ENCODE measurements at regions of chr5 and their contacts with region 1.

Region 1: DNA sequence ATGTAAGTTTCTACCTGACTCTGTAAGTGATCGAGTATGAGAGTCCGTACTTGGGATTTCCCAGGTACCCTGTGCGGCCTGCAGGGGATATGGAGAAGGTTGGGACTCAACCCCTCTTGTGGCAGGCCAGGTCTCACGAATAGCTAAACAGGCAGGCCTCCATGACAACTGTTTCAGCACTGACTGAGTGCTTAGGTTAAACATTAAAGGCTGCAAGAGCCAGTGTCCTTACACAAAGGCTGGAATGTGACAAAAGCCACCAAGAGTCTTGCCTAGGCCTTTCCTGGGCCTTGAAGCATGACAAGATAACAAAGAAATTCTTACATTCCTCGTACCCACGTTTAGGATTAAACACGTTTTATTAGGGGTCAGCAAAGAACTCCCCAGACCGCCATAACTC is 58.6 kb downstream of the THBS4 start:
- DNase-seq: no peak
- H3K4me3 ChIP-seq: no peak overlapping the region
- H3K27ac ChIP-seq: no peak overlapping the region
- H3K4me1 ChIP-seq: no peaks in the 10 kb centered on the region
- H3K27me3 ChIP-seq: no peaks in the 10 kb centered on the region
- CTCF ChIP-seq: no peak
- POLR2A ChIP-seq: no peak

Region 2: GRCh38 chr5:79759436-79759835 is 334.4 kb before region 1 on chr5:
- intact Hi-C with region 1: no loop called
- DNase-seq: no peak
- H3K4me3 ChIP-seq: no peak overlapping the region
- H3K27ac ChIP-seq: no peak overlapping the region
- H3K4me1 ChIP-seq: no peaks in the 10 kb centered on the region
- H3K27me3 ChIP-seq: no peaks in the 10 kb centered on the region
- CTCF ChIP-seq: no peak
- POLR2A ChIP-seq: no peak

Region 3: GRCh38 chr5:79974891-79975290 is 118.9 kb before region 1 on chr5:
- intact Hi-C with region 1: no loop called
- DNase-seq: no peak
- H3K4me3 ChIP-seq: no peak overlapping the region
- H3K27ac ChIP-seq: no peak overlapping the region
- H3K4me1 ChIP-seq: no peaks in the 10 kb centered on the region
- H3K27me3 ChIP-seq: no peaks in the 10 kb centered on the region
- CTCF ChIP-seq: no peak
- POLR2A ChIP-seq: no peak

Region 4: GRCh38 chr5:80055491-80056170 is 38.2 kb before region 1 on chr5:
- intact Hi-C with region 1: no loop called
- DNase-seq: no peak
- H3K4me3 ChIP-seq: no peak overlapping the region
- H3K27ac ChIP-seq: no peak overlapping the region
- H3K4me1 ChIP-seq: no peaks in the 10 kb centered on the region
- H3K27me3 ChIP-seq: no peaks in the 10 kb centered on the region
- CTCF ChIP-seq: no peak
- POLR2A ChIP-seq: no peak

Region 5: DNA sequence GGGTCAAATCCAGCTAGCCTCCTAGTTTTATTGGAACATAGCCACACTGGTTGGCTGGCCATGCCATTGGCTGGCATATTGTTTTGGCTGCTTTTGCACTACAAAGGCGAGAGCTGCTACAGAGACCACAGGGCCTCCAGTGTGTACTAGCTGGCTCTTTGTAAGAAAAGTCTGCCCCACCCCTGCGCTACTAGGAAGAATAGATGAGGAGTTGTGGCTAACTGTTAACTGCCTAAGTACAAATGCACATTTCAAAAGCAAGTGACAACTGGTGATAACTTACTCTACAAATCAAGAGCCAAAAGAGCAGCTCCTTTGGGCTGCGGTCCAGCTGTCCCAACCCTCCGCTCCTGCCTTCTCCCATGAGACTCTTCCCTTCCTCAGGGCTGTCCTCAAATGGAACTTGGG is 98.2 kb after region 1 on chr5:
- intact Hi-C with region 1: loop called (anchors 10 kb)
- DNase-seq: no peak
- H3K4me3 ChIP-seq: no peak overlapping the region
- H3K27ac ChIP-seq: peak overlapping the region; percentile 63 to 68
- H3K4me1 ChIP-seq: peaks cover 22% of the 10 kb centered on the region
- H3K27me3 ChIP-seq: no peaks in the 10 kb centered on the region
- CTCF ChIP-seq: no peak
- POLR2A ChIP-seq: no peak

Region 6: DNA sequence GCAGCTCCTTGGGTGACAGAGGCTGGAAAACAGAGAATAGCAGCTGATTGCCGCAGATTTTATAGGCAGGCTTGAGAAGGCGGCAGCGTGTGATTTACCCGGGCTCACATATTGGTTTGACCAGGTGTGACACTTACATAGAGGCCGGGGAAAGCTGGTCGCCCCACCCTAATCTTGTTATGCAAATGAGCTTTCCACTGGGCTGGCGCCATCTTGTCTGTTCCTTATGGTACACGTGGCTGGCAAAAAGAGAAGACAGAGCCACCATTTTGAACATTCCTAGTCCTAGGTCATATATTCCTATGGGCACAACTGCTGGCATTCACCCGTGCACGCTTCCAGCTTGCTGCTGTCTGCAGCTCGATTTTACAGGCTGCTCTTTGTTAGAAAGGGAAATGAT is 214.7 kb after region 1 on chr5:
- intact Hi-C with region 1: loop called (anchors 2 kb)
- DNase-seq: no peak
- H3K4me3 ChIP-seq: no peak overlapping the region
- H3K27ac ChIP-seq: no peak overlapping the region
- H3K4me1 ChIP-seq: no peaks in the 10 kb centered on the region
- H3K27me3 ChIP-seq: no peaks in the 10 kb centered on the region
- CTCF ChIP-seq: no peak
- POLR2A ChIP-seq: no peak

Measured in prostate gland (tissue), 2 donors.